ENCODE measurements at regions of chr19 and their contacts with region 1.

Region 1: GRCh38 chr19:49443366-49444099 is 2.2 kb upstream of the SLC17A7 start:
- DNase-seq: peak; percentile 93 to 96 (median 95)
- H3K4me3 ChIP-seq: peak overlapping the region; percentile 55
- H3K27ac ChIP-seq: peak overlapping the region in 1 of 2 donors; percentile 3
- H3K4me1 ChIP-seq: no peaks in the 10 kb centered on the region
- H3K27me3 ChIP-seq: no peaks in the 10 kb centered on the region
- CTCF ChIP-seq: peak; percentile 89 to 99 (median 90)
- EP300 ChIP-seq: no peak
- POLR2A ChIP-seq: peak; percentile 16

Region 2: GRCh38 chr19:49224856-49225255 is 218.7 kb before region 1 on chr19:
- intact Hi-C with region 1: loop called in 3 of 4 experiments (anchors 5 kb)
- DNase-seq: no peak
- H3K4me3 ChIP-seq: no peak overlapping the region
- H3K27ac ChIP-seq: no peak overlapping the region
- H3K4me1 ChIP-seq: no peaks in the 10 kb centered on the region
- H3K27me3 ChIP-seq: no peaks in the 10 kb centered on the region
- CTCF ChIP-seq: no peak
- EP300 ChIP-seq: no peak
- POLR2A ChIP-seq: no peak

Region 3: DNA sequence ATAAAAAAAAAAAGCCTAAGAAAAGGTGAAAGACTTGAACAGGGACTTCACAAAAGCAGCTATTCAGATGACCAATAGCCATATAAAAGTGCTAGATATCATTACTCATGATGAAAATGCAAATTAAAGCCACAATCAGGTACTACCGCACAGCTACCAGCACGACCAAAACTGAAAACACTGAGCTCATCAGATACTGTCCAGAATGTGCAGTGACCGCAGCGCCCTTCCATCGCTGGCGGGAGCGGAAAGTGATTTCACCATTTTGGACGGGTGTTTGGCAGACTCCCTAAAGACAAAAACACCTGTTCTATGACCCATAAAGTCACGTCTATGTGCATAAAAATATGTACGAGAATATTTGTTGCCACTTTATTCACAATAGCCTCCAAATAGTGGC is 179.3 kb before region 1 on chr19:
- intact Hi-C with region 1: no loop called
- DNase-seq: no peak
- H3K4me3 ChIP-seq: no peak overlapping the region
- H3K27ac ChIP-seq: no peak overlapping the region
- H3K4me1 ChIP-seq: no peaks in the 10 kb centered on the region
- H3K27me3 ChIP-seq: no peaks in the 10 kb centered on the region
- CTCF ChIP-seq: no peak
- EP300 ChIP-seq: no peak
- POLR2A ChIP-seq: no peak

Region 4: GRCh38 chr19:49363268-49364082 is 80.1 kb before region 1 on chr19 and contains the start of gene DKKL1:
- intact Hi-C with region 1: loop called in 1 of 4 experiments (anchors 10 kb)
- DNase-seq: peak; percentile 100
- H3K4me3 ChIP-seq: peak within 1 kb of the TSS; percentile 53
- H3K27ac ChIP-seq: peak within 1 kb of the TSS; percentile 88 to 92
- H3K4me1 ChIP-seq: no peaks in the 10 kb centered on the region
- H3K27me3 ChIP-seq: no peaks in the 10 kb centered on the region
- CTCF ChIP-seq: no peak
- EP300 ChIP-seq: no peak
- POLR2A ChIP-seq: peak; percentile 62
- total RNA-seq, gene DKKL1: 0.22 to 2.4 (median 1.3) TPM in 6 of 7 donors, not detected in the other

Region 5: DNA sequence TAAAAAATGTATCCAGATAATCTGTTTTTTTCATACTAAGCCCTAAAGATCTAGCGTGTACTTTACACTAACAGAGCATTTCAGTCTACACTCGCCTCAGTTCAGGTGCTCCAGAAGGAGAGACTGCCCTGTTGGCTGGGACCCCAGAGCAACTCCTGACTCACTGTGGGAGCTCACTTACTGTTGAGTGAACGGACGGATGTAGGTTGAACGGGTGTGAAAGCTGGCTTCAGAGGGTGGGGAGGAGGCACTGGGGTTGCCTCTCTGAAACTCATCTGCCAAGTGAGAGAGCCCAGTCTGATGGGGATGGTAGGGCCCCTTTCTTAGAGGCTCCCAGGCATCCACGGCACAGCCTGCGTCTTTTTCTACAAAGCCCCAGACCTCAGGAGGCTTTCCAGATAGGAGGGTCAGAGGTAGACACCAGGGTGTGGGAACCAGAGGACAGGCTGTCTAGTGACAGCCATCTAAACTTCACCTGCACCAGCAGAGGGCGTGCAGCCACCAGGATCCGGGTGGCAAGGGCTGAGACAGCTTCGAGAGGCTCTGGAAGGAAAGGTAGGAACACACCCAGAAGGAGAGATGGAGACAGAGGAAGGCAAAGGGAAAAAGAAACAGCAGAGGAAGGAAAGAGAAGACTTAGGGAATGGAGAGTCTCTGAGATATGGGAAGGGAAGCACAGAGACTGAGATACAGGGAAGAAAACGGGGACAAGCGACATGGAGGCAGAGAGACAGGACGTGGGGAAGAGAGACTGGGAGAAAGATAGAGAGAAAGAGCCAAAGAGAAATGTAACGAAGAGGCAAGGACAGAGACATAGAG is 51.7 kb before region 1 on chr19:
- intact Hi-C with region 1: loop called in 2 of 4 experiments (anchors 2 to 5 kb)
- DNase-seq: peak; percentile 57 to 74 (median 64)
- H3K4me3 ChIP-seq: no peak overlapping the region
- H3K27ac ChIP-seq: no peak overlapping the region
- H3K4me1 ChIP-seq: no peaks in the 10 kb centered on the region
- H3K27me3 ChIP-seq: no peaks in the 10 kb centered on the region
- CTCF ChIP-seq: peak in 2 of 3 donors; percentile 60 to 62
- EP300 ChIP-seq: no peak
- POLR2A ChIP-seq: no peak

Measured in ovary (tissue), 10 donors.